PC-3 (cell line): ENCODE measurements at regions of chr7 and their contacts with region 1.

Region 1: GRCh38 chr7:26686448-26686981 is 177.9 kb downstream of the SKAP2 start:
- DNase-seq: peak; percentile 63
- ATAC-seq: peak; percentile 42
- H3K4me3 ChIP-seq: no peak overlapping the region
- H3K27ac ChIP-seq: no peak overlapping the region
- H3K4me1 ChIP-seq: peaks cover 15% of the 10 kb centered on the region; the same call in 1 of the 2 replicates
- H3K27me3 ChIP-seq: no peaks in the 10 kb centered on the region
- CTCF ChIP-seq: peak; percentile 76

Region 2: GRCh38 chr7:26723129-26723528 is 36.6 kb after region 1 on chr7:
- CTCF ChIA-PET with region 1: no interaction called
- POLR2A ChIA-PET with region 1: no interaction called
- intact Hi-C with region 1: no loop called
- DNase-seq: no peak
- ATAC-seq: no peak
- H3K4me3 ChIP-seq: no peak overlapping the region
- H3K27ac ChIP-seq: no peak overlapping the region
- H3K4me1 ChIP-seq: no peaks in the 10 kb centered on the region
- H3K27me3 ChIP-seq: no peaks in the 10 kb centered on the region
- CTCF ChIP-seq: no peak

Region 3: GRCh38 chr7:26843705-26844104 is 157.2 kb after region 1 on chr7:
- CTCF ChIA-PET with region 1: no interaction called
- POLR2A ChIA-PET with region 1: no interaction called
- intact Hi-C with region 1: loop called (anchors 2 kb)
- DNase-seq: peak; percentile 50
- ATAC-seq: peak; percentile 70
- H3K4me3 ChIP-seq: no peak overlapping the region
- H3K27ac ChIP-seq: no peak overlapping the region
- H3K4me1 ChIP-seq: no peaks in the 10 kb centered on the region
- H3K27me3 ChIP-seq: no peaks in the 10 kb centered on the region
- CTCF ChIP-seq: peak; percentile 54

Region 4: GRCh38 chr7:26853788-26854393 is 167.4 kb after region 1 on chr7:
- CTCF ChIA-PET with region 1: interaction called, 3 read pairs
- POLR2A ChIA-PET with region 1: no interaction called
- intact Hi-C with region 1: loop called (anchors 1 kb)
- DNase-seq: peak; percentile 73
- ATAC-seq: peak; percentile 92
- H3K4me3 ChIP-seq: no peak overlapping the region
- H3K27ac ChIP-seq: no peak overlapping the region
- H3K4me1 ChIP-seq: peaks cover 8% of the 10 kb centered on the region; the same call in 1 of the 2 replicates
- H3K27me3 ChIP-seq: no peaks in the 10 kb centered on the region
- CTCF ChIP-seq: peak; percentile 77